Activated CD8-positive, alpha-beta memory T cell treated with anti-CD3 and anti-CD28 coated beads, Interleukin-2, amount 10 ng/mL, durations not matched to agents 7 days and 5 days (primary cell): ENCODE measurements at regions of chr12 and their contacts with region 1.

Region 1: GRCh38 chr12:6423267-6424007 is 21.3 kb upstream of the CD27 start:
- DNase-seq: peak; percentile 88
- ATAC-seq: peak; percentile 76
- H3K4me3 Mint-ChIP-seq: no peak overlapping the region
- H3K27ac Mint-ChIP-seq: peak overlapping the region; percentile 66
- H3K4me1 Mint-ChIP-seq: peaks cover 46% of the 10 kb centered on the region
- H3K27me3 Mint-ChIP-seq: peaks cover 3% of the 10 kb centered on the region

Region 2: DNA sequence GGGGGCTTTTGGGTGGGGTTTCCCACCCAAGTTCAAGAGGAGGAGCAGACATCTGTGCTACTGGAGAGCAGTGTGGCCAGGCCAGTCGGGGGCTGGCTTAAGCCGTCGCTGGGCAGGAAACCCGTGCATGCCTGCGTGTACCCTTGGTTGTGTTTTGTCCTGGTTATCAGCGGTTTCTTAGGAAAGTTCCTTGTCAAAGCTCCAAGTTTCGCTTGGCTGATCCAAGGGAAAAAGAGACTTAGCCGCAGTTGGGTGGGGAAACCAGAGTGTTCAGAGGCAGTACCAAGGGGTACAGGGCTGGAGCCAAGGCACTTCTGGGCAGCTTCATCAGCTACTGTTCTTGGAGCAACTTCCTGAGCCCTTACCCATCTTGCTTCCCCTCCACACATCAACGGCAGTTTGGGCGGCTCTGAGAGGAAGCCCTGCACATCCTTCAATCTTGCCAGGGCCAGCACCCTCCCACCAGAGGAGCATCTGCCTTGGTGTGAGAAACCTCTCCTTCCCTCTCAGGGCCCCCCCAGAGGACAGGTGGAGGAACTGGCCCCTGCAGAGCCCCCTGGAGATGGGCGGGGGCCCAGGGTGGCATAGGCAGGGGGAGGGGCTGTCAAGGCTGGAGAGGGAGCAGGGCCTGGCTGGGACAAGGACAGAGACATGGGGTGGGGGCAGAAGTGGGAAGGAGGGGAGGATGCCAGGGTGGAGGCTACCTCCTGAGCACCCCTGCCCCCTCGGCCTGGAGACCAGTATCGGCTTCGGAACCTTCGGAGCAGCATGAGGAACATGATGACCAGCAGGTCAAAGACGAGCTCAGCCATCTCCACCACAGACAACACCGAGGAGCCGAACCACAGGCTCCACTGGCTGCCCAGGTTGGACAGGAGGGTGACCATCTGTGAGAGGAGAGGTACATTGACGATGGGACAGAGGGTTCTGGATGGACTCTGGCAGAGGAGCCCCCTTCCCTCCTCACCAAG is 75.8 kb before region 1 on chr12:
- CTCF ChIA-PET with region 1: no interaction called
- DNase-seq: no peak
- ATAC-seq: no peak
- H3K4me3 Mint-ChIP-seq: no peak overlapping the region
- H3K27ac Mint-ChIP-seq: no peak overlapping the region
- H3K4me1 Mint-ChIP-seq: peaks cover 34% of the 10 kb centered on the region
- H3K27me3 Mint-ChIP-seq: no peaks in the 10 kb centered on the region

Region 3: DNA sequence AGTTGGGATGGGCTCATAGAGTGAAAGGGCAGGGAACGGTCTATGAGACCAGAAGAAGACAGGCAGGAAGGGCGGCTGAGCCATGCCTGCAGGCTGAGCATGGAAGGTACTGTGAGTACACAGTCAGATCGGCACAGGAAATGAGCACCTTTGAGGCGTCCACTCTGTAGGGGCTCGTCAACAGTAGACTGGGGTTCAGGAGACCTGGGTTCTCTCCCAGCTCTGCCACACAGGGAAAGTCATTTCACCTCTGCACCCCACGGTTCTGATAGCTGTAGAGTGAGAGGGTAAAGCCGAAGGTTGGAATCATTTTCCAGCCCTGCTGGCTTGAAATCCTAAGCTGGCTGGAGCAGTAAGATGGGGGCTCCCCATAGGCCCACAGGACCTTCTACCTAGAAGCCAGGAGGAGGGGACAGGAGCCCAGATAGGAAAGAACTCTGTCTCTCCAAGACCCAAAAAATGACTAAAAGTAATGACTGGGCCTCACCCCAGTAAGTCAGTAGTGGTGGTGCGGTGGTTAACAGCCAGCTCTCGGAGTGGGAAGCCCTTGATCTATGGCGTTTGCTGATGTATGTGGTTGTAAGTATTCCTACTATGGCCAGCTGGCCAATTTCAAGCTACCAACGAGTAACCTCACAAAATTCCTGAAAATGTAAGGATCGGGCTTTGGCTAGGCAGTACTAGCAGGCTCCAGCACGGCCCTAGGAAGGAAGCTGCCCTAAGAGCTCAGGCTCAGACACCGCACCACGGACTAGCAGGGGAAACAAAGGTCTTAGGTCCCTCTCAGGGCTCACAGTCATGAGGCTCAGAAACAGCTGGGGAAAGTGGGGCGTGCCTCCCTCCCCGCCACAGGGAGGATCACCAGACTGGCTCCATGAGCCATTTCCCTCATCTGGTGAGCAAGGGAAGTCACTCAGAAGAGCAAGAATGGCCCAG is 11.0 kb after region 1 on chr12:
- CTCF ChIA-PET with region 1: interaction called, 15 read pairs
- DNase-seq: peak; percentile 68
- ATAC-seq: peak; percentile 85
- H3K4me3 Mint-ChIP-seq: peak overlapping the region; percentile 58
- H3K27ac Mint-ChIP-seq: peak overlapping the region; percentile 86
- H3K4me1 Mint-ChIP-seq: peaks cover 49% of the 10 kb centered on the region
- H3K27me3 Mint-ChIP-seq: no peaks in the 10 kb centered on the region

Region 4: GRCh38 chr12:6451348-6452244 is 28.2 kb after region 1 on chr12 and contains the start of gene TAPBPL:
- CTCF ChIA-PET with region 1: interaction called, 10 read pairs
- DNase-seq: peak; percentile 90
- ATAC-seq: peak; percentile 84
- H3K4me3 Mint-ChIP-seq: peak within 1 kb of the TSS; percentile 97
- H3K27ac Mint-ChIP-seq: peak within 1 kb of the TSS; percentile 94
- H3K4me1 Mint-ChIP-seq: peaks cover 59% of the 10 kb centered on the region
- H3K27me3 Mint-ChIP-seq: no peaks in the 10 kb centered on the region
- total RNA-seq, gene TAPBPL: 49.1 to 53.0 TPM

Region 5: DNA sequence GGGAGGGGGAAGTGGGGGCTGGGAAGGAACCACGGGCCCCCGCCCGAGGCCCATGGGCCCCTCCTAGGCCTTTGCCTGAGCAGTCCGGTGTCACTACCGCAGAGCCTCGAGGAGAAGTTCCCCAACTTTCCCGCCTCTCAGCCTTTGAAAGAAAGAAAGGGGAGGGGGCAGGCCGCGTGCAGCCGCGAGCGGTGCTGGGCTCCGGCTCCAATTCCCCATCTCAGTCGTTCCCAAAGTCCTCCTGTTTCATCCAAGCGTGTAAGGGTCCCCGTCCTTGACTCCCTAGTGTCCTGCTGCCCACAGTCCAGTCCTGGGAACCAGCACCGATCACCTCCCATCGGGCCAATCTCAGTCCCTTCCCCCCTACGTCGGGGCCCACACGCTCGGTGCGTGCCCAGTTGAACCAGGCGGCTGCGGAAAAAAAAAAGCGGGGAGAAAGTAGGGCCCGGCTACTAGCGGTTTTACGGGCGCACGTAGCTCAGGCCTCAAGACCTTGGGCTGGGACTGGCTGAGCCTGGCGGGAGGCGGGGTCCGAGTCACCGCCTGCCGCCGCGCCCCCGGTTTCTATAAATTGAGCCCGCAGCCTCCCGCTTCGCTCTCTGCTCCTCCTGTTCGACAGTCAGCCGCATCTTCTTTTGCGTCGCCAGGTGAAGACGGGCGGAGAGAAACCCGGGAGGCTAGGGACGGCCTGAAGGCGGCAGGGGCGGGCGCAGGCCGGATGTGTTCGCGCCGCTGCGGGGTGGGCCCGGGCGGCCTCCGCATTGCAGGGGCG is 110.7 kb after region 1 on chr12 and contains the start of gene GAPDH:
- CTCF ChIA-PET with region 1: interaction called, 71 read pairs
- DNase-seq: peak; percentile 94
- ATAC-seq: peak; percentile 53
- H3K4me3 Mint-ChIP-seq: peak within 1 kb of the TSS; percentile 92
- H3K27ac Mint-ChIP-seq: peak within 1 kb of the TSS; percentile 99
- H3K4me1 Mint-ChIP-seq: peaks cover 54% of the 10 kb centered on the region
- H3K27me3 Mint-ChIP-seq: no peaks in the 10 kb centered on the region
- total RNA-seq, gene GAPDH: 5,133 to 5,396 TPM